ENCODE measurements at regions of chr4 and their contacts with region 1.

Region 1: GRCh38 chr4:118746292-118746919 is 61.2 kb downstream of the METTL14 start:
- DNase-seq: no peak
- H3K4me3 Mint-ChIP-seq: no peak overlapping the region
- H3K27ac Mint-ChIP-seq: no peak overlapping the region
- H3K4me1 Mint-ChIP-seq: no peaks in the 10 kb centered on the region
- H3K27me3 Mint-ChIP-seq: no peaks in the 10 kb centered on the region
- CTCF ChIP-seq: no peak

Region 2: GRCh38 chr4:118760493-118760892 is 14.1 kb after region 1 on chr4:
- CTCF ChIA-PET with region 1: interaction called, 11 read pairs
- POLR2A ChIA-PET with region 1: interaction called, 4 read pairs
- intact Hi-C with region 1: no loop called
- DNase-seq: no peak
- H3K4me3 Mint-ChIP-seq: no peak overlapping the region
- H3K27ac Mint-ChIP-seq: no peak overlapping the region
- H3K4me1 Mint-ChIP-seq: peaks cover 20% of the 10 kb centered on the region
- H3K27me3 Mint-ChIP-seq: no peaks in the 10 kb centered on the region
- CTCF ChIP-seq: no peak

Region 3: DNA sequence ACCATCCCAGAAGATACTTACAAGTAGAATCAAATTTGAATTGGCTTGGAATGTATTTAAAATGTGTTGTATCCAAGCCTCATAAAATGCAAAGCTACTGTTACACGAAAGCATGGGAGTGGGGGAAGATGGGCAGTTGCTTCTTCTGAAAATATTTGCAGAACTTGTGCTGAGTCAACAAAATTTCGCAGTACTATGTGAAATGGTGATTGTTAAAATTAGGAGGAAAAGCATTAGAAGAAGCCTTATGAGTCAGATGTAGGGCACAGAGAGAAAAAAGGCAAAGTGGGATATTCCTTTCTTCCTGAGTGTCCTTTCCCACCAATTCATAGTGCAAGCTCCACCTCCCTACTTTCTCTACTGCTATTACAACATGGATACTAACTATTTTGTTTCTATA is 1843.4 kb after region 1 on chr4:
- CTCF ChIA-PET with region 1: no interaction called
- POLR2A ChIA-PET with region 1: no interaction called
- intact Hi-C with region 1: no loop called
- DNase-seq: no peak
- H3K4me3 Mint-ChIP-seq: no peak overlapping the region
- H3K27ac Mint-ChIP-seq: no peak overlapping the region
- H3K4me1 Mint-ChIP-seq: no peaks in the 10 kb centered on the region
- H3K27me3 Mint-ChIP-seq: no peaks in the 10 kb centered on the region
- CTCF ChIP-seq: no peak

Measured in MCF 10A (cell line).